ENCODE measurements at regions of chr14 and their contacts with region 1.

Region 1: DNA sequence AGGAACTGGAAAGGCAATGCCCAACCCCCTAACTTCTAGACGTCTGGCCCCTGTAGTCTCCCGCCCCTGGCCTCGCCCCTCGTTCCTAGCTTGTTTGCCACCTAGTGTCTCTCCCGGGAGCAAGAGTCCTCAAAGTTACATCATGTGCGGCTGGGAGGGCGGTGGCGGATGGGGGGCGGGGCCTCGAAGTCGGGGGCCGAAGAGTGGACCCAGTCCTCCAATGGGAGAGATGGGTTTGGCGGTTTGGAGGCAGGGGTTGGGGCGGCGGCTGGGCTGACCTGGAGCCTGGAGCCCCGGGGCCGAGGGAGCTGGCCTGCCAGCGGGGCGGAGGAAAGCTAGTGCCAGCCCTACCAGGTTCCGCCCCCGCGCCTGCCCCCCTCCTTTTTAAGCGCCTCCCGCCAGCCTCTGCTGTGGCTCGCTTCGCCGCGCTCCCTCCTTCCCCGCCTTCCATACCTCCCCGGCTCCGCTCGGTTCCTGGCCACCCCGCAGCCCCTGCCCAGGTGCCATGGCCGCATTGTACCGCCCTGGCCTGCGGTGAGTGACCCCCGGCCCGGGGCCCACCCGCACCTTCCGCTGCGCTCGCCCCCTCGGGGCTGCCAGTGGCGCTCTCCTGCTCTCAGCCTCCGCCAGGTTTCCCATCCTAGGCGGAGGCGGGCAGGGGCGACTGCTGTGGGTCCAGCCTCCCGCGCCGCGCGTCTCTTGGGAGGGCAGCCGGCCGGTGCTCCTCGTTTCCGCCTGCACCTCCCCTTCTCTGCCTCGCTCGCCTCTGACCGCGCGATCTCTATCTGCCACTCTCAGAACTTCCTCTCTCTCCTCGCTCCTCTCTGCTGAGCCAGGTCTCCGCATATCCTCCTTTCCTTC is at the start of gene PCK2:
- DNase-seq: peak; percentile 73
- H3K4me3 ChIP-seq: peak within 1 kb of the TSS; percentile 83
- H3K27ac ChIP-seq: peak within 1 kb of the TSS; percentile 68
- H3K27me3 ChIP-seq: no peaks in the 10 kb centered on the region
- CTCF ChIP-seq: no peak
- polyA plus RNA-seq, gene PCK2: 47.0 and 59.9 TPM in 2 replicates

Region 2: GRCh38 chr14:24051789-24052655 is 42.1 kb before region 1 on chr14 and contains the start of gene CARMIL3:
- CTCF ChIA-PET with region 1: interaction called, 196 read pairs
- POLR2A ChIA-PET with region 1: interaction called, 3 read pairs
- DNase-seq: peak; percentile 16
- H3K4me3 ChIP-seq: peak within 1 kb of the TSS; percentile 60
- H3K27ac ChIP-seq: no peak within 1 kb of the TSS
- H3K27me3 ChIP-seq: peaks cover 30% of the 10 kb centered on the region
- CTCF ChIP-seq: no peak
- polyA plus RNA-seq, gene CARMIL3: 0.02 TPM in 1 of 2 replicates, not detected in the other

Region 3: GRCh38 chr14:24064091-24064749 is 29.9 kb before region 1 on chr14:
- CTCF ChIA-PET with region 1: interaction called, 196 read pairs
- POLR2A ChIA-PET with region 1: no interaction called
- DNase-seq: no peak
- H3K4me3 ChIP-seq: no peak overlapping the region
- H3K27ac ChIP-seq: no peak overlapping the region
- H3K27me3 ChIP-seq: peaks cover 47% of the 10 kb centered on the region
- CTCF ChIP-seq: no peak

Region 4: DNA sequence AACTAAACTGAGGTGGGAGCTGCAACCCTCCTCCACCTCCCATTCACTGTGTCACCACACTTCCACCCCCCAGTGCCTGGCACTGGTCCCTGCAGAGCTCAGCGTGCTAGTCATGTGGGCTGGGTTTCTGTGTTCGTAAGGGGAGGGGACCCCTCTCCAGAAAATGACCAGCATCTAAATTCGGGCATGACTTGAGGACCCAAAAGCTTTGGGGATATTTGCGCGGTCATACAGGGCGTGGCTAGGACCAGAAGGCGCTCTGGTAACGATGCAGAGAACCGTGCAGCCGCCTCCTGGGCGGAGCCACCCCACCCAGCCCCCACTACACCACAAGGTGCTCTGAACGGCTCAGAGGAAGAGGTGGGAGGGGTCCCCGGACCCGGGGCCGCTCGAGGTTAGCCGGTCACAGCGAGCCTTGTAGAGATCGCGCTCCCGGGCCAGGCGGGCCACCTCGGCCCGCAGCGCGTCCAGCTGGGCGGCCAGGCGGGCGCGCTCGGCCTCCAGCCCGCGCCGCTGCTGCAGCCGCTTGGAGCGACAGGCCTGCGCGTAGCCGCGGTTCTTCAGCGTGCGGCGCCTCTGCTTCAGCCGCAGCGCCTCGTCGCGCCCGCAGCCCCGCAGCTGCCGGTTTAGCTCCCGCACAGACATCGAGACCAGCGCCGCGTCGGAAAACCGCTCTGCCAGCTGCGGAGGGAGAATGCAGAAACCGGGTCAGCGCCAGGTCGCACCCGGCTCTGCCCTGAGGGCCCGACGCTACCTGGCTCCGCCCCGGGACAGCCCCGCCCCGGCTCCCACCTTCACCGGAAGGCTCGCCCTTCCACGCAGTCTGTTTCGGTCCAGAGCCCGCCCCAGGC is 13.0 kb before region 1 on chr14:
- CTCF ChIA-PET with region 1: interaction called, 29 read pairs
- POLR2A ChIA-PET with region 1: interaction called, 7 read pairs
- DNase-seq: no peak
- H3K4me3 ChIP-seq: peak overlapping the region; percentile 58
- H3K27ac ChIP-seq: no peak overlapping the region
- H3K27me3 ChIP-seq: peaks cover 68% of the 10 kb centered on the region
- CTCF ChIP-seq: no peak

Region 5: DNA sequence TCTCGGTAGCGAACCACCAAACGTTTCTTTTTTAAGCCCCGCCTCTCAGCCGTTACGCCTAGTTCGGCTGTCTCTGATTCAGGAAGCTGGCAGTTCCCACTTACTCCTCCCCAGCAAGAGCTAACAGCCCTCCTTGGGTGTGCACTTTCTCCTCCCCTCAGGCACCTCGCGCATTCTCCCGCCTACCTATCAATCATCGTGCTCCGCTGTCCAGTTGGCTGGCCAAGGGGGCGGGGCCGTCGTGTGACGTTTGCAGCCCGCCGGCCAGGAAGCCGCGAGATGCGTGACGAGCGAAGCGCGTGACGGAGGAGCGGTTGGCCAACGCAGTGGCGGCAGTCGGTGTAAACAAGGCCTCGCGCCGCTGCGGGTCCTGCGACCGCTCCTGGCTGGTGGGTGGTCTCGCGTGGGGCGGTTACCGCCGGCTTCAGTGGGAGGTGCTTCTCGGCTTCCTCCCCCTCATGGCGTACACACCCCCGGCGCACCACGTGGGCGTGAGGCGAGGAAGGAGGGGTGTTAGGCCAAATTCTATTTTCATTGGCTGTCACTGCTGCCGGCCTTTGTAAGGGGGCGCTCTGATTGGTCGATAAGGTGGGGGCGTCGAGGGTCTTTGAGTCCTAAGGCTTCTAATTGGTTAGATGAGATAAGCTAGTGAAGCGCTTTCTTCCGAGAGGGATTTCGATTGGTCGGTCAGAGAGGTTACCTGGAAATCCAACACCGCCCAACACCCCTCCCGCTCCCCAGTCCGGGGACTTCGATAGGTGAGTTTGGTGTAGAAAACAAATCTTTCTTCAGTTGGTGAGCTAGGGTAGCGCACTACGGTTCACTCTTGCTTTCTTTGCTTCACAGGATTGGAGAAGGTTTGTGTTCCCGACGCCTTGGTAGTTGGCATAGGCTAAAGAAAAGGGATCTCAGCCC is 20.7 kb after region 1 on chr14 and contains the starts of genes DCAF11 and NRL:
- CTCF ChIA-PET with region 1: interaction called, 212 read pairs
- POLR2A ChIA-PET with region 1: interaction called, 36 read pairs
- DNase-seq: peak; percentile 99
- H3K4me3 ChIP-seq: peak within 1 kb of the TSS; percentile 92
- H3K27ac ChIP-seq: peak within 1 kb of the TSS; percentile 99
- H3K27me3 ChIP-seq: no peaks in the 10 kb centered on the region
- CTCF ChIP-seq: no peak
- polyA plus RNA-seq, gene DCAF11: 29.7 and 32.5 TPM in 2 replicates
- polyA plus RNA-seq, gene NRL: 0.41 and 0.46 TPM in 2 replicates